IMR-90 (cell line): ENCODE measurements at regions of chr10 and their contacts with region 1.

Region 1: DNA sequence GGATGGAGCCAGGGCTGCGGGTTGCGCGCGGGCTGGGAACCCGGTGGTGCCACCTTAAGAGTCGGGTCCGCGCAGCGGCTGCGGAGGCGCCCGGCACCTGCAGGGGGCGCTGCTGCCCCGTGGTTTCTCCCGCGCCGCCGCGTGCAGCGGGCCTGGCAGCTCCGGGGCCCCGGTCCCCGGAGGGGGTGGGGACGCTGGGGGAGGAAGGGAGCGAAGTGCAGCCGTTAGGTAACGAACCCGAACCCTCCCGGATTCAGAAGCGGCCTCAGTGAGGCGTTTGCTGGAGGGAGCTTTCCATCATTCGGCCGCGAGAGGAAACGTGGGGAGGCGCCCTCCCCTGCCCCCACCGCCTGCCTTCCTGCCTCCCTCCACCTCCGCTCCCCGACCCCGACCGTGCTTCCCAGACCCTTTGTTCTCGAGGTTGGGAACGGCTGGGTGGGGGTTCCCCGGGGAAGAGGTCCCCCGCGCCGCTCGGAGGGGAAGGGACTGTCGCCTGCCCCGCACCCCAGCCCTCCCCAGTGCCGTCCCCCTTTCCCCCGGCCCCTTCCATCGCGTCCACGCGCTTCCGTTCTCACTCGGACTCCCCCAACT is 29.6 kb downstream of the SKIDA1 start:
- DNase-seq: peak; percentile 77
- ATAC-seq: peak; percentile 80
- H3K4me3 ChIP-seq: peak overlapping the region; percentile 91
- H3K27ac ChIP-seq: peak overlapping the region; percentile 81
- H3K4me1 ChIP-seq: peaks cover 3% of the 10 kb centered on the region; the same call in 1 of the 2 replicates
- H3K27me3 ChIP-seq: peaks cover 5% of the 10 kb centered on the region
- CTCF ChIP-seq: peak; percentile 98
- POLR2A ChIP-seq: no peak
- RAD21 ChIP-seq: peak; percentile 95

Region 2: DNA sequence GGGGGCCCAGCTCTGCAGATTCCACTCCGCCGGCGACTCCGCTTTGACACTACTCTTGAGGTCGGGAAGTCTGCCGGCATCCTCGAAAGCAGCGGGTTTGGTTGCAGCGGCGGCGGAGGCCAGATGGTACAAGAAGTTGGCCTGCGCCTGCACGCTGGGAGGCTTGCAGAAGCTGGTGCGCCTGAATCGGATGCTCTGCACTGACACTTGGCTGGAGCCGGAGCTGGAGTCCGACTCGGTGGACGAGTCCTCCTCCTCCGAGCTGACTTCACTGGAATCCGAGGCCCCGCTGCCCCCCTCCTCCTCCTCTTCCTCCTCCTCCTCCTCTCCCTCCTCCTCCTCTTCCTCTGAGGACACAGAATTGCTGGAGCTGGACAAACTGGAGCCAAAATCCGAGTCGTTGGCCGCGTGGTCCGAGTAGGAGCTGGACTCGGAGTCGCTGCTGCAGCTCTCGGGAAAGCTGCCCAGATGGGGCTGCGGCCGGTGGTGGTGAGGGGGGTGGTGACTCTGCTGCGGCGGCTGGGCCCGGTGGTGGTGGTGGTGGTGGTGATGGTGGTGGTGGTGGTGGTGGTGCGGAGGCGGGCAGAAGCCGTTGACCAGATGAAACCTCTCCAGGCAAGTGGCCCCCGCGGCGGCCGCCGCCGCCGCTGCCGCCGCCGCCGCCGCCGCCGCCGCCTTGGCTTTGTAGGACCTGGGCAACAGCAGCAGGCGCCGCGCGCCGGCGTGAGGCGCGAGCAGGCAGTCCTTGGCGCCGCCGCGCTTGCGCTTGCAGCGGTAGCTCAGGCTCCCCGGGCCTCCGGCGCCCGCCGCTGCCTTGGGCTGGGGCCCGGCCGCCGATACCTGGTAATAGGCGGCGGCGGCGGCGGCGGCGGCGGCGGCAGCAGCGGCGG is 20.6 kb after region 1 on chr10:
- CTCF ChIA-PET with region 1: interaction called, 8 read pairs
- POLR2A ChIA-PET with region 1: no interaction called
- dilution Hi-C with region 1: no loop called
- in situ Hi-C with region 1: no loop called
- intact Hi-C with region 1: loop called (anchors 2 kb)
- DNase-seq: peak; percentile 78
- ATAC-seq: peak; percentile 62
- H3K4me3 ChIP-seq: peak overlapping the region; percentile 95
- H3K27ac ChIP-seq: peak overlapping the region; percentile 71
- H3K4me1 ChIP-seq: peaks cover 2% of the 10 kb centered on the region; the same call in 1 of the 2 replicates
- H3K27me3 ChIP-seq: no peaks in the 10 kb centered on the region
- CTCF ChIP-seq: no peak
- POLR2A ChIP-seq: no peak
- RAD21 ChIP-seq: peak; percentile 10; the same call in 1 of the 2 replicates

Region 3: DNA sequence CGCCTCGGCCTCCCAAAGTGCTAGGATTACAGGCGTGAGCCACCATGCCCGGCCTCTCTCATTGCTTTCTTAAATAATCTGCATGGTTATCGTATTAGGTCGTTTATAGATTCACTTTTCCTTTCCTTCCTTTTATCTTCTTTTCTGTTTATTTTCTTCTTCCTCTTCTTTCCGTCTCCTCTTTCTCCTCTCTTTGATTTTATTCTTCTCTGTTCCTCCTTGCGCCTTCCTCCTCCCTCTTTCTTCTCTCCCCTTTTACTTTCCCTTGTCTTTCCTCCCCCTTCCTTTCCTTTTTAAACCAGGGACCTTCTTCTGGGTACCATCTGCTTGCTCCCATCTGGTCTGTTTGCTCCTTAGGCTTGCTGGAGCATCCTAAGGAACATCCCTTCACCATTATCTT is 56.8 kb after region 1 on chr10:
- CTCF ChIA-PET with region 1: interaction called, 3 read pairs
- POLR2A ChIA-PET with region 1: interaction called, 11 read pairs
- dilution Hi-C with region 1: no loop called
- in situ Hi-C with region 1: no loop called
- intact Hi-C with region 1: no loop called
- DNase-seq: no peak
- ATAC-seq: no peak
- H3K4me3 ChIP-seq: no peak overlapping the region
- H3K27ac ChIP-seq: no peak overlapping the region
- H3K4me1 ChIP-seq: no peaks in the 10 kb centered on the region
- H3K27me3 ChIP-seq: no peaks in the 10 kb centered on the region
- CTCF ChIP-seq: no peak
- POLR2A ChIP-seq: no peak
- RAD21 ChIP-seq: no peak

Region 4: GRCh38 chr10:21943633-21944265 is 447.9 kb after region 1 on chr10:
- CTCF ChIA-PET with region 1: no interaction called
- POLR2A ChIA-PET with region 1: no interaction called
- dilution Hi-C with region 1: no loop called
- in situ Hi-C with region 1: loop called (anchors 10 kb)
- intact Hi-C with region 1: no loop called
- DNase-seq: no peak
- ATAC-seq: no peak
- H3K4me3 ChIP-seq: no peak overlapping the region
- H3K27ac ChIP-seq: no peak overlapping the region
- H3K4me1 ChIP-seq: no peaks in the 10 kb centered on the region; the same call in 1 of the 2 replicates
- H3K27me3 ChIP-seq: no peaks in the 10 kb centered on the region
- CTCF ChIP-seq: no peak
- POLR2A ChIP-seq: no peak
- RAD21 ChIP-seq: no peak

Region 5: DNA sequence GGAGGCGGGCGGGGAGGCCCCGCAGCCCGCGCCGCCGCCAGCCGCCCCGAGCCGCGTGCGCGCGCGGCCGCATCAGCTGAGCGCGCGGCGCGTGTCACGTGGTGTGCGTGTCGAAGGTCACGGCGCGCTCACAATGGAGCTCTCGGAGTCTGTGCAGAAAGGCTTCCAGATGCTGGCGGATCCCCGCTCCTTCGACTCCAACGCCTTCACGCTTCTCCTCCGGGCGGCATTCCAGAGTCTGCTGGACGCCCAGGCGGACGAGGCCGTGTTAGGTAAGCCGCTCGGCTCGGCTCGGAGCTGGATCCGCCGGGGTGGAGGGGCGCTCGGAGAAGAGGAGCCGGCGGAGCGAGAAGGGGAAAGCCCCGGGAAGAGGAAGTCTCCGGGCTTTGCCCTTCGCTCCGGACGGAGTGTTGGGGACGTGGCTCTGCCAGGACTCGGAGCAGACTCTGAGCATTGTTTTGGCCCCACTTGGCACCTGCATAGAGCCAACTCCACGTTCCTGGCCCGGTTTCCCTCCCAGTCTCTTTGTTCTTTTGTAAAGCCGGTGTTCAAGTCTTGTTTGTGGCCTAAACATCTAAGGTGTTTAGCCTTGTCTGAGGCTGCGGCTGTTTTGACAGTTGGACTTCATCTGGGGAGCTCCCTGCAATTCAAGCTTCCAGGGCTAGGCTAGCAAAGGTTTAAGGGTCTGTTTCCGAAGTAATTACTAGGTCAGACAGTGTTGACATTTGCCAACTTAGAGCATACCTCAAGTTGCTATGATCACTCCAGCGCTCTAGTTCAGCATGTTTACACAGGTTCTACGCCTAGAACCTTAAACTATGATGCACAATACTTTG is 820.7 kb after region 1 on chr10 and contains the start of gene COMMD3:
- CTCF ChIA-PET with region 1: interaction called, 3 read pairs
- POLR2A ChIA-PET with region 1: no interaction called
- dilution Hi-C with region 1: no loop called
- in situ Hi-C with region 1: loop called (anchors 25 kb)
- intact Hi-C with region 1: loop called (anchors 5 kb)
- DNase-seq: peak; percentile 86
- ATAC-seq: peak; percentile 74
- H3K4me3 ChIP-seq: peak within 1 kb of the TSS; percentile 76
- H3K27ac ChIP-seq: peak within 1 kb of the TSS; percentile 93
- H3K4me1 ChIP-seq: no peaks in the 10 kb centered on the region
- H3K27me3 ChIP-seq: peaks cover 2% of the 10 kb centered on the region; the same call in 1 of the 2 replicates
- CTCF ChIP-seq: no peak
- POLR2A ChIP-seq: no peak
- RAD21 ChIP-seq: no peak
- total RNA-seq, gene COMMD3: 33.1 and 44.8 TPM in 2 replicates